ENCODE measurements at regions of chr1 and their contacts with region 1.

Region 1: GRCh38 chr1:67053785-67054772 is at the start of gene SLC35D1:
- DNase-seq: peak; percentile 61 to 91 (median 74)
- ATAC-seq: peak; percentile 83
- H3K4me3 ChIP-seq: peak within 1 kb of the TSS; percentile 90
- H3K4me3 Mint-ChIP-seq: peak within 1 kb of the TSS; percentile 95
- H3K27ac ChIP-seq: peak within 1 kb of the TSS; percentile 87 to 97
- H3K27ac Mint-ChIP-seq: peak within 1 kb of the TSS; percentile 78
- H3K4me1 ChIP-seq: peaks cover 11% of the 10 kb centered on the region
- H3K4me1 Mint-ChIP-seq: peaks cover 39% of the 10 kb centered on the region
- H3K27me3 ChIP-seq: no peaks in the 10 kb centered on the region
- H3K27me3 Mint-ChIP-seq: no peaks in the 10 kb centered on the region
- CTCF ChIP-seq: no peak
- total RNA-seq, gene SLC35D1: 8.1 to 9.1 TPM

Region 2: GRCh38 chr1:66929999-66930822 is 123.9 kb before region 1 on chr1:
- CTCF ChIA-PET with region 1: no interaction called
- POLR2A ChIA-PET with region 1: interaction called, 11 read pairs
- intact Hi-C with region 1: loop called in 1 of 2 experiments (anchors 10 kb)
- DNase-seq: peak; percentile 88 to 98 (median 94)
- ATAC-seq: peak; percentile 66
- H3K4me3 ChIP-seq: peak overlapping the region; percentile 93
- H3K4me3 Mint-ChIP-seq: peak overlapping the region; percentile 91
- H3K27ac ChIP-seq: peak overlapping the region; percentile 87 to 88
- H3K27ac Mint-ChIP-seq: peak overlapping the region; percentile 84
- H3K4me1 ChIP-seq: peaks cover 18% of the 10 kb centered on the region
- H3K4me1 Mint-ChIP-seq: peaks cover 74% of the 10 kb centered on the region
- H3K27me3 ChIP-seq: no peaks in the 10 kb centered on the region
- H3K27me3 Mint-ChIP-seq: no peaks in the 10 kb centered on the region
- CTCF ChIP-seq: peak; percentile 52

Region 3: DNA sequence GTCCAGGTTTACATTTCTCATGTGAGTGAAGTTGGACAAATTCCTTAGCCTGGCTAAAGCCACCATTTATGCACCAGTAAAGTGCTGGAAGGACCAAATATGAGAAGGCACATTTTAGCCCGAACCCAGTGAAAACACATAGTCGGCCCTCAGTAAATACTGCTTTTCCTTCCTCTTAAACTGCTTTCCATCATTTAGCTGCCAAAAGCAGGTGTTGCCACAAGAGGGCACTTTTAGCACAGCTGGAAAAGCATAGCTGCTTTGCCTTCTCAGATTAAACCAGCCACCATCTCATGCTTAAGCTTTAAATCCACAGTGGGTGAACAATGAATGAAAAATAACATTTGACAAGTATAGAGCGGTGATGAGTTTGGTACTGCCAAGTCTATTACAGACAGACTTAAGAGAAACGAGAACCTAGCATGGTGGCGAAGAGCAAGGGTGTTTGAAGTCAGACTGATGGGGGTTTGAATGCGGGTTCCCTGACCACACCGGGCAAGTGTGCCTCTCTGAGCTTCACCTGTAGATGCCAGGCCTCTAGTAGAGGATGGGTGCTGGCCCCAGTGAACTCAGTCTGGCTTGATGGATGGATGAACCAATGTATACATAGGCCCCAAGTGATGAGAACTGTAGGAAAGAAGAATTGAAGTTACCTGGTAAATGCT is 57.9 kb before region 1 on chr1:
- CTCF ChIA-PET with region 1: no interaction called
- POLR2A ChIA-PET with region 1: interaction called, 13 read pairs
- intact Hi-C with region 1: loop called in 1 of 2 experiments (anchors 5 kb)
- DNase-seq: peak; percentile 32 to 78 (median 52)
- ATAC-seq: peak; percentile 89
- H3K4me3 ChIP-seq: no peak overlapping the region
- H3K4me3 Mint-ChIP-seq: no peak overlapping the region
- H3K27ac ChIP-seq: no peak overlapping the region
- H3K27ac Mint-ChIP-seq: peak overlapping the region; percentile 2
- H3K4me1 ChIP-seq: peaks cover 5% of the 10 kb centered on the region
- H3K4me1 Mint-ChIP-seq: peaks cover 28% of the 10 kb centered on the region
- H3K27me3 ChIP-seq: no peaks in the 10 kb centered on the region
- H3K27me3 Mint-ChIP-seq: no peaks in the 10 kb centered on the region
- CTCF ChIP-seq: peak; percentile 73

Region 4: DNA sequence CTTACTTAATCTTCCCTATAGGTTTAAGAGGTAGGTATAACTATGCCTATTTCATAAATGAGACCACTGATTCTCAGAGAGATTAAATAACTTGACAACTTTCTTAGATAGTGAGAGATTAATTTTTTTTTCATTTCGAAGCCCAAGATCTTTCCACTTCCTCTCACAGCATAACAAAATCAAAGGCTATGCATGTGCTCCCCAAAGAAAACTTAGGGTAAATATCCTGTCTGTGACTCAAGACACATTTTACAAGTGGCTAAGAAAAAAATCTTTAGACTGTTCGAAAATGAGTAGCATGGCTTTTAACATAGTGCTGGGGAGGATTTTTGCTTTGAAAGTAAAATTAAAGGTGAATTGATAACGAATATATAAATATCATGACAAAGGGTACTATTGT is 88.9 kb after region 1 on chr1:
- CTCF ChIA-PET with region 1: no interaction called
- POLR2A ChIA-PET with region 1: interaction called, 18 read pairs
- intact Hi-C with region 1: loop called (anchors 2 to 5 kb)
- DNase-seq: peak in 3 of 14 experiments; percentile 28 to 59 (median 30)
- ATAC-seq: peak; percentile 92
- H3K4me3 ChIP-seq: no peak overlapping the region
- H3K4me3 Mint-ChIP-seq: peak overlapping the region; percentile 8
- H3K27ac ChIP-seq: no peak overlapping the region
- H3K27ac Mint-ChIP-seq: peak overlapping the region; percentile 70
- H3K4me1 ChIP-seq: peaks cover 4% of the 10 kb centered on the region
- H3K4me1 Mint-ChIP-seq: peaks cover 46% of the 10 kb centered on the region
- H3K27me3 ChIP-seq: no peaks in the 10 kb centered on the region
- H3K27me3 Mint-ChIP-seq: no peaks in the 10 kb centered on the region
- CTCF ChIP-seq: no peak

Region 5: GRCh38 chr1:67214420-67215174 is 160.5 kb after region 1 on chr1:
- CTCF ChIA-PET with region 1: interaction called, 3 read pairs
- POLR2A ChIA-PET with region 1: interaction called, 3 read pairs
- intact Hi-C with region 1: loop called in 1 of 2 experiments (anchors 5 kb)
- DNase-seq: peak in 12 of 14 experiments; percentile 13 to 64 (median 31)
- ATAC-seq: peak; percentile 49
- H3K4me3 ChIP-seq: no peak overlapping the region
- H3K4me3 Mint-ChIP-seq: no peak overlapping the region
- H3K27ac ChIP-seq: no peak overlapping the region
- H3K27ac Mint-ChIP-seq: no peak overlapping the region
- H3K4me1 ChIP-seq: peaks cover 7% of the 10 kb centered on the region
- H3K4me1 Mint-ChIP-seq: peaks cover 26% of the 10 kb centered on the region
- H3K27me3 ChIP-seq: no peaks in the 10 kb centered on the region
- H3K27me3 Mint-ChIP-seq: no peaks in the 10 kb centered on the region
- CTCF ChIP-seq: peak; percentile 69

Region 6: DNA sequence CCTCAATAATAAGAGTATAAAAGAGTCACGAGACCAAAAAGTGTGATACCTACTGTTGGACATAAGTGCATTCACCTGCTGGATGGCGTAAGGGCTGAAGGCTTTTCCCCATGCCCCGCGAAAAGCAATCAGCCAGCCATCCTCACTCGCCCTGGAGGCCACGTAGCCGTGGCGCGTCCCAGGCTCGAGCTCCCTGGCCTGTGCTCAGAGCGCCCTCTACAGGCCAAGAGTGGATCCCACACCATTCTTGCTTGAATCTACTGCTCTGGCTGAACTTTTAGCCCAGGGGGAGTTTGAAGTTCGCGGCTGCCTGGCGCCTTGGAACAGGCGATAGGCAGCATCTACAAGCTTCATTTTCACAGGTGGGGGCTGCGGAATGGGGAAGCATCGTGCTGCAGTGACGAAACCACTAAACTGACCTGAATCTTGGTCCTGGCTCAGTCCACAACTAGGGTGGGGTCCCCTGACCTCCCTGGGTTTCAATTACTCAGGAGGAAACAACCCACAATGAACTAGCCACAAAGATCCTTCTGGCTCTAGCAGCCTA is 446.4 kb after region 1 on chr1:
- CTCF ChIA-PET with region 1: no interaction called
- POLR2A ChIA-PET with region 1: no interaction called
- intact Hi-C with region 1: loop called in 1 of 2 experiments (anchors 5 kb)
- DNase-seq: peak; percentile 73 to 92 (median 81)
- ATAC-seq: peak; percentile 100
- H3K4me3 ChIP-seq: no peak overlapping the region
- H3K4me3 Mint-ChIP-seq: no peak overlapping the region
- H3K27ac ChIP-seq: no peak overlapping the region
- H3K27ac Mint-ChIP-seq: no peak overlapping the region
- H3K4me1 ChIP-seq: peaks cover 7% of the 10 kb centered on the region
- H3K4me1 Mint-ChIP-seq: no peaks in the 10 kb centered on the region
- H3K27me3 ChIP-seq: peaks cover 0 to 3% of the 10 kb centered on the region in 2 experiments
- H3K27me3 Mint-ChIP-seq: no peaks in the 10 kb centered on the region
- CTCF ChIP-seq: peak; percentile 99

Measured in CD4-positive, alpha-beta T cell (primary cell).